ENCODE measurements at regions of chr15 and their contacts with region 1.

Region 1: GRCh38 chr15:89613031-89613430 is 37.8 kb downstream of the TICRR start:
- DNase-seq: no peak
- H3K4me3 ChIP-seq: no peak overlapping the region
- H3K4me3 Mint-ChIP-seq: no peak overlapping the region
- H3K27ac Mint-ChIP-seq: no peak overlapping the region
- H3K4me1 ChIP-seq: no peaks in the 10 kb centered on the region
- H3K4me1 Mint-ChIP-seq: no peaks in the 10 kb centered on the region
- H3K27me3 ChIP-seq: no peaks in the 10 kb centered on the region
- H3K27me3 Mint-ChIP-seq: no peaks in the 10 kb centered on the region
- CTCF ChIP-seq: no peak

Region 2: DNA sequence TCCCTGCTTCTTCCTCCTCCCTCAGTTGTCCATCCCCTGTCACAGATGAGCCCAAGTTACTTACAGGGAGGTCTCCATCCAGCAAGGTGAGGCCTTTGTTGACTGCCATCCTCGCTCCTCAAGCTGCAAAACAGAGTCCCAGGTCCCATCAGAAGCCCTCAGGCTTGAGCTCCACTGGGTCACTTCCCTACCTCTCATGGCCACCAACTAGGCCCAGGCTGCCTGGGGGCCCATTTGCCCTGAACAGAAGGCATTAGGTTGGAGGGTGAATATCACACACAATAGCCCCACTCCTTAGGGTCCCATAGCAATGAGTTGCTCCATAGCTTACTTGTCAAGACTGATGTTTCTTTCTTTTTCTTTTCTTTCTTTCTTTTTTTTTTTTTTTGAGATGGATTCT is 64.3 kb after region 1 on chr15:
- CTCF ChIA-PET with region 1: no interaction called
- POLR2A ChIA-PET with region 1: interaction called, 13 read pairs
- intact Hi-C with region 1: no loop called
- DNase-seq: no peak
- H3K4me3 ChIP-seq: no peak overlapping the region
- H3K4me3 Mint-ChIP-seq: no peak overlapping the region
- H3K27ac Mint-ChIP-seq: no peak overlapping the region
- H3K4me1 ChIP-seq: no peaks in the 10 kb centered on the region
- H3K4me1 Mint-ChIP-seq: no peaks in the 10 kb centered on the region
- H3K27me3 ChIP-seq: no peaks in the 10 kb centered on the region
- H3K27me3 Mint-ChIP-seq: no peaks in the 10 kb centered on the region
- CTCF ChIP-seq: no peak